Mammary epithelial cell (primary cell): ENCODE measurements at regions of chr3 and their contacts with region 1.

Region 1: GRCh38 chr3:82133070-82133606 is 371.7 kb upstream of the GBE1 start:
- DNase-seq: peak; percentile 24
- H3K4me3 ChIP-seq: no peak overlapping the region
- H3K27ac ChIP-seq: no peak overlapping the region
- H3K4me1 ChIP-seq: no peaks in the 10 kb centered on the region
- H3K27me3 ChIP-seq: no peaks in the 10 kb centered on the region
- CTCF ChIP-seq: peak; percentile 75 to 88

Region 2: GRCh38 chr3:81581966-81582599 is 551.1 kb before region 1 on chr3:
- CTCF ChIA-PET with region 1: no interaction called
- dilution Hi-C with region 1: no loop called
- in situ Hi-C with region 1: no loop called
- intact Hi-C with region 1: loop called (anchors 10 kb)
- DNase-seq: peak; percentile 19
- H3K4me3 ChIP-seq: no peak overlapping the region
- H3K27ac ChIP-seq: no peak overlapping the region
- H3K4me1 ChIP-seq: no peaks in the 10 kb centered on the region
- H3K27me3 ChIP-seq: no peaks in the 10 kb centered on the region
- CTCF ChIP-seq: peak; percentile 74

Region 3: GRCh38 chr3:81666493-81667121 is 466.5 kb before region 1 on chr3:
- CTCF ChIA-PET with region 1: no interaction called
- dilution Hi-C with region 1: no loop called
- in situ Hi-C with region 1: no loop called
- intact Hi-C with region 1: loop called (anchors 1 kb)
- DNase-seq: no peak
- H3K4me3 ChIP-seq: no peak overlapping the region
- H3K27ac ChIP-seq: no peak overlapping the region
- H3K4me1 ChIP-seq: no peaks in the 10 kb centered on the region
- H3K27me3 ChIP-seq: no peaks in the 10 kb centered on the region
- CTCF ChIP-seq: peak; percentile 56 to 71

Region 4: GRCh38 chr3:81910244-81910852 is 222.8 kb before region 1 on chr3:
- CTCF ChIA-PET with region 1: no interaction called
- dilution Hi-C with region 1: no loop called
- in situ Hi-C with region 1: no loop called
- intact Hi-C with region 1: loop called (anchors 2 kb)
- DNase-seq: peak; percentile 24
- H3K4me3 ChIP-seq: no peak overlapping the region
- H3K27ac ChIP-seq: no peak overlapping the region
- H3K4me1 ChIP-seq: no peaks in the 10 kb centered on the region
- H3K27me3 ChIP-seq: no peaks in the 10 kb centered on the region
- CTCF ChIP-seq: peak; percentile 69 to 75

Region 5: GRCh38 chr3:81995329-81995728 is 137.8 kb before region 1 on chr3:
- CTCF ChIA-PET with region 1: no interaction called
- dilution Hi-C with region 1: no loop called
- in situ Hi-C with region 1: no loop called
- intact Hi-C with region 1: loop called (anchors 1 kb)
- DNase-seq: no peak
- H3K4me3 ChIP-seq: no peak overlapping the region
- H3K27ac ChIP-seq: no peak overlapping the region
- H3K4me1 ChIP-seq: no peaks in the 10 kb centered on the region
- H3K27me3 ChIP-seq: no peaks in the 10 kb centered on the region
- CTCF ChIP-seq: peak; percentile 24 to 72

Region 6: GRCh38 chr3:82012775-82013174 is 120.4 kb before region 1 on chr3:
- CTCF ChIA-PET with region 1: no interaction called
- dilution Hi-C with region 1: no loop called
- in situ Hi-C with region 1: no loop called
- intact Hi-C with region 1: loop called (anchors 5 kb)
- DNase-seq: no peak
- H3K4me3 ChIP-seq: no peak overlapping the region
- H3K27ac ChIP-seq: no peak overlapping the region
- H3K4me1 ChIP-seq: no peaks in the 10 kb centered on the region
- H3K27me3 ChIP-seq: no peaks in the 10 kb centered on the region
- CTCF ChIP-seq: peak; percentile 41 to 47